ENCODE measurements at regions of chr14 and their contacts with region 1.

Region 1: GRCh38 chr14:73886449-73887317 is at the start of gene ZNF410:
- DNase-seq: peak; percentile 92

Region 2: DNA sequence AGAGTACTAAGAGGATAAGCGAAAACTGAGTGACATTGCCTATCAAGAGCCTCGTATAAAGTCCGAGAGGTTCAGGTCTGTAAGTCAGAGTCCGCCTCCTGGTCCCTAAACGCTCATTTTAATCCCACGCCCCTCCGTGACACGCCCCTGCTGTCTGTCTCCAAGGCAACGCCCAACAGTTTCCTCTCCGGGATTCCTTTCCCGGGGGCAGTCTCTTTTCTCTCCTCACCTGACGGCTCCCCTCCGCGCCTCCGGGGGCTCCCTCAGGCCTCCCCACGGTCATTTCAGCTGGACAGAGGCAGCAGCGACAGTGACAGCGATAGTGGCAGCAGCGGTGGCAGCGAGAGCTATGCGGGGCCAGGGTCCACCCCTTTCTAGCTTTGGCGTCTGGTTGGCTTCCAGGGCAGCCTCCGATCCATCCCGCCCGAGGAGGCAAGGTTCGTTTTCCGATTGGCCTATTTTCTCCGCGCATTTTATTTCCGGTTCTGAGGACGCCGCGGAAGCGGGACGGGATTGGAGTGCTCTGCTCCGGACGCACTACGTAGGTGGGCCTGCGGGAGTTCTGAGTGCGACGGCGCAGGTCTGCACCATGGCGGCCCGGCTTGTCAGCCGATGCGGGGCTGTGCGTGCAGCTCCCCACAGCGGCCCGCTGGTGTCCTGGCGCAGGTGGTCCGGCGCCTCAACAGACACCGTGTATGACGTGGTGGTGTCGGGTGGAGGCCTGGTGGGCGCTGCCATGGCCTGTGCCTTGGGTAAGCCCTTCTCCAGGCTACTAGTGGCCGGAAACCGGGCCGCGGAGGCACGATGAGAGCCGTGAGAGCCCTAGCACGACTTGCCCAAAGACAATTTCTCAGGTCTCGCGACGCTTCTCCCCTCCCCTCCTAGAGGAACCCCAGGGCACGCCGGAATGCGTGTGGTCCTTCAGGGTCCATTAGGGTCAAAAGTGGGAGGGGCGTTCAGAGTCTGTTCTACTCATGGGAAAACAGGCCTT is 63.4 kb after region 1 on chr14 and contains the starts of genes COQ6 and FAM161B:
- CTCF ChIA-PET with region 1: no interaction called
- POLR2A ChIA-PET with region 1: interaction called, 10 read pairs
- DNase-seq: peak; percentile 89